ENCODE measurements at regions of chr16 and their contacts with region 1.

Region 1: GRCh38 chr16:81745704-81746558 is 33.2 kb upstream of the PLCG2 start:
- H3K4me3 Mint-ChIP-seq: peak overlapping the region; percentile 74
- H3K27ac Mint-ChIP-seq: peak overlapping the region; percentile 75
- H3K4me1 Mint-ChIP-seq: peaks cover 51% of the 10 kb centered on the region
- H3K27me3 Mint-ChIP-seq: no peaks in the 10 kb centered on the region

Region 2: GRCh38 chr16:81831722-81832126 is 85.8 kb after region 1 on chr16:
- intact Hi-C with region 1: loop called (anchors 10 kb)
- H3K4me3 Mint-ChIP-seq: peak overlapping the region; percentile 13
- H3K27ac Mint-ChIP-seq: peak overlapping the region; percentile 64
- H3K4me1 Mint-ChIP-seq: peaks cover 83% of the 10 kb centered on the region
- H3K27me3 Mint-ChIP-seq: no peaks in the 10 kb centered on the region

Measured in dendritic cell treated with granulocyte-macrophage colony-stimulating factor and Interleukin-4, amounts not matched to agents 40 ng/mL and 50 ng/mL, for 4 days (primary cell).